ENCODE measurements at regions of chr1 and their contacts with region 1.

Region 1: GRCh38 chr1:165129568-165130164 is 226.8 kb downstream of the LMX1A start:
- DNase-seq: peak; percentile 61
- H3K4me3 Mint-ChIP-seq: no peak overlapping the region
- H3K27ac Mint-ChIP-seq: no peak overlapping the region
- H3K4me1 Mint-ChIP-seq: no peaks in the 10 kb centered on the region
- H3K27me3 Mint-ChIP-seq: peaks cover 10% of the 10 kb centered on the region

Region 2: GRCh38 chr1:165144757-165145397 is 15.2 kb after region 1 on chr1:
- CTCF ChIA-PET with region 1: interaction called, 11 read pairs
- intact Hi-C with region 1: no loop called
- DNase-seq: peak; percentile 59
- H3K4me3 Mint-ChIP-seq: no peak overlapping the region
- H3K27ac Mint-ChIP-seq: no peak overlapping the region
- H3K4me1 Mint-ChIP-seq: no peaks in the 10 kb centered on the region
- H3K27me3 Mint-ChIP-seq: peaks cover 30% of the 10 kb centered on the region